Esophagus muscularis mucosa (tissue), 4 donors: ENCODE measurements at regions of chr1 and their contacts with region 1.

Region 1: GRCh38 chr1:235328357-235329138 is at the start of gene GGPS1:
- DNase-seq: peak; percentile 100
- H3K4me3 ChIP-seq: peak within 1 kb of the TSS; percentile 73 to 100 (median 86)
- H3K27ac ChIP-seq: peak within 1 kb of the TSS; percentile 90 to 99 (median 98)
- H3K4me1 ChIP-seq: peaks cover 57 to 77% (median 75%) of the 10 kb centered on the region in 4 donors
- H3K27me3 ChIP-seq: no peaks in the 10 kb centered on the region
- CTCF ChIP-seq: peak in 1 of 3 experiments; percentile 17
- EP300 ChIP-seq: no peak
- POLR2A ChIP-seq: peak; percentile 77
- total RNA-seq, gene GGPS1: 25.7 to 30.5 (median 28.7) TPM

Region 2: GRCh38 chr1:235128456-235129328 is 199.9 kb before region 1 on chr1 and contains the start of gene TOMM20:
- intact Hi-C with region 1: loop called (anchors 10 kb)
- DNase-seq: peak; percentile 98
- H3K4me3 ChIP-seq: peak within 1 kb of the TSS; percentile 72 to 91 (median 80)
- H3K27ac ChIP-seq: peak within 1 kb of the TSS; percentile 86 to 95 (median 88)
- H3K4me1 ChIP-seq: peaks cover 15 to 43% (median 40%) of the 10 kb centered on the region in 4 donors
- H3K27me3 ChIP-seq: no peaks in the 10 kb centered on the region
- CTCF ChIP-seq: no peak
- EP300 ChIP-seq: no peak
- POLR2A ChIP-seq: peak; percentile 83
- total RNA-seq, gene TOMM20: 59.7 to 94.3 (median 86.3) TPM

Region 3: GRCh38 chr1:235253219-235253962 is 75.2 kb before region 1 on chr1:
- intact Hi-C with region 1: loop called (anchors 5 kb)
- DNase-seq: peak; percentile 92
- H3K4me3 ChIP-seq: no peak overlapping the region
- H3K27ac ChIP-seq: no peak overlapping the region
- H3K4me1 ChIP-seq: peaks cover 0 to 28% (median 15%) of the 10 kb centered on the region in 4 donors
- H3K27me3 ChIP-seq: no peaks in the 10 kb centered on the region
- CTCF ChIP-seq: peak; percentile 84 to 88 (median 88)
- EP300 ChIP-seq: no peak
- POLR2A ChIP-seq: no peak

Region 4: GRCh38 chr1:235367000-235367908 is 38.7 kb after region 1 on chr1 and contains the start of gene TBCE:
- intact Hi-C with region 1: loop called (anchors 2 kb)
- DNase-seq: peak; percentile 98
- H3K4me3 ChIP-seq: peak within 1 kb of the TSS; percentile 68 to 84 (median 80)
- H3K27ac ChIP-seq: peak within 1 kb of the TSS; percentile 81 to 90 (median 84)
- H3K4me1 ChIP-seq: peaks cover 10 to 20% (median 18%) of the 10 kb centered on the region in 4 donors
- H3K27me3 ChIP-seq: no peaks in the 10 kb centered on the region
- CTCF ChIP-seq: peak in 2 of 3 experiments; percentile 15 to 19
- EP300 ChIP-seq: no peak
- POLR2A ChIP-seq: peak; percentile 62
- total RNA-seq, gene TBCE: 10.6 to 21.6 (median 15.3) TPM

Region 5: GRCh38 chr1:235415008-235415904 is 86.7 kb after region 1 on chr1:
- intact Hi-C with region 1: loop called (anchors 5 kb)
- DNase-seq: no peak
- H3K4me3 ChIP-seq: no peak overlapping the region
- H3K27ac ChIP-seq: no peak overlapping the region
- H3K4me1 ChIP-seq: peaks cover 3 to 10% (median 6%) of the 10 kb centered on the region in 4 donors
- H3K27me3 ChIP-seq: no peaks in the 10 kb centered on the region
- CTCF ChIP-seq: peak; percentile 60 to 71 (median 64)
- EP300 ChIP-seq: no peak
- POLR2A ChIP-seq: no peak

Region 6: GRCh38 chr1:235504496-235505222 is 176.1 kb after region 1 on chr1:
- intact Hi-C with region 1: loop called (anchors 10 kb)
- DNase-seq: peak; percentile 100
- H3K4me3 ChIP-seq: peak overlapping the region; percentile 80 to 96 (median 92)
- H3K27ac ChIP-seq: peak overlapping the region; percentile 96 to 98 (median 98)
- H3K4me1 ChIP-seq: peaks cover 21 to 43% (median 38%) of the 10 kb centered on the region in 4 donors
- H3K27me3 ChIP-seq: no peaks in the 10 kb centered on the region
- CTCF ChIP-seq: peak; percentile 72 to 92 (median 91)
- EP300 ChIP-seq: peak; percentile 85
- POLR2A ChIP-seq: peak; percentile 70